ENCODE measurements at regions of chr2 and their contacts with region 1.

Region 1: DNA sequence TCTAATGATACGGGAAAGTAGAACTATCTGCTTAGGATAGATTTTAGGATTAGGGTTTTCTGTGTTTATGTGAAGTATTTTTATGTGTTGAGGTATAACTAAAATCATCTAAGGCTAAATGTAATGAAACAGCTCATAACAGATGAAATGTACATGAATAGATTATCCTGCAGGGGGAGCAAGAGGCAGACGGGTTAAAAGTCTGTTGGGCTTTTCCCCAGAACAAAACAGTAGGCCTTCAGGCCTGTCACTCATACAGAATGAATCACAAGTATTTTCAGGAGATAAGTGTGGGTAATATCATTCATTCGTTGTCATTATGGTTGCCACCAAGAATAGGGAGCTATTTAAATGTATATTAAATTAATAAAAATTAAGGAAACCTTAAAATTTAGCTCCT is 107.9 kb upstream of the IL1R2 start:
- DNase-seq: peak; percentile 39
- CTCF ChIP-seq: peak; percentile 37

Region 2: GRCh38 chr2:101580528-101580927 is 303.3 kb before region 1 on chr2:
- CTCF ChIA-PET with region 1: no interaction called
- POLR2A ChIA-PET with region 1: no interaction called
- DNase-seq: no peak
- CTCF ChIP-seq: no peak

Region 3: DNA sequence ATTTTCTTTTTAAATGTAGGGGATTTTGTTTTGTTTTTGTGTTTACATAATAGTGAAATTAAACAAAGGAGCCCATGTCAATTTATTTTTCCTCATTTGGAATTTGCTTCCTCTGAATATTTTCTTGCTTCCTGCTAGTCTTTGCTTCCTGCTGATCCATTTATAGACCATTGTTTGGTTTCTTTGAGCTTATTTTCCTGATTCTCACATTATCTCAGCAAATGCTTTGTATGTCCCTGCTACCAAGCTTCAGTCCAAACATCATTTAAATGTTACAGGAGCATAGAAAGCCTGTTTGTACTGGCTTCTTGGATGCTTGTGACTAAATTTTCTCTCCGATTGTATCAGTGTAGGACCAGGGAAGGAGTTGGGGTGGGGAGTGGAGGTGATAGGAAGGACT is 19.4 kb before region 1 on chr2:
- CTCF ChIA-PET with region 1: interaction called, 20 read pairs
- POLR2A ChIA-PET with region 1: no interaction called
- DNase-seq: no peak
- CTCF ChIP-seq: no peak

Region 4: GRCh38 chr2:101873543-101873942 is 10.3 kb before region 1 on chr2:
- CTCF ChIA-PET with region 1: interaction called, 19 read pairs
- POLR2A ChIA-PET with region 1: no interaction called
- DNase-seq: no peak
- CTCF ChIP-seq: peak; percentile 19

Region 5: DNA sequence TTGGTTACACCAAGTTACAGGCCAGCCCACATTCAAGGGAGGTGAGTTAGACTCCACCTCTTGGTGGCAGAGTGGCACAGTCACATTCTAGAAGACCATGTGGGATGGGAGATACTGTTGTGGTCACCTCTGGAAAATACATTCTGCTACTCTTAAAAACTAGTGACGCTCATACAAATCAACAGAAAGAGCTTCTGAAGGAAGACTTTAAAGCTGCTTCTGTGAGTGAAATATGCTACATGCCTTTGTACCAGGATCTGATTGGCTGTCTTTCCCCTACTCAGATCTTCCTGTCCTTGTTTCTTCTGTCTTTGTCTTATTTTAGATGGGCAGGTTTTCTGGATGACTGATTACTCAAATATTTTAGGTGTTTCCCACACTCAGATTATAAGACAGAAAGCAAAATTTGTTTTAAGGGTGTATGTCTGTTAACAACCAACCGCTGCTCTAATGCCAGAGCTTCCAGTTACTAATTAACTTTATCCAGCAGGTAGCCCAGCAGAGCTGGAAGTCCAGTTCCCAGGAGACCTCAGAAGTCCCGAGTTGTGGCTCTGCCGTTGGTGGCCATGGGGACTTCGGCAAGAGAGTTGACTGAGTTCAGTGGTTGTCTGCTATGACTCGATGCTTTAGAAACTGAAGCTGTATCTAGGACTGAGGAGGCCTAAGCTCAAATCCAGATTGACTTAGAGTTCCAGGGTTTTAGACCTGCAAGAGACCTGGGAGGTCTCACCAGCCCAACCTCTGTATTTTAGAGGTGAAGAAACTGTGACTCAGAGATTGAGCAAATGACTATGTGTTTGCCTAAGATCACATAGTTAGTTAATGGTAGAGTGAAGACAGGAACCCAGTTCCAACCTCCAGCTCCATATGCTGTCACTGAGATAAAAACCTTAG is 115.3 kb after region 1 on chr2:
- CTCF ChIA-PET with region 1: interaction called, 15 read pairs
- POLR2A ChIA-PET with region 1: no interaction called
- DNase-seq: no peak
- CTCF ChIP-seq: peak; percentile 6

Measured in GM10248 (cell line).